Prostate gland (tissue), 2 donors: ENCODE measurements at regions of chr2 and their contacts with region 1.

Region 1: DNA sequence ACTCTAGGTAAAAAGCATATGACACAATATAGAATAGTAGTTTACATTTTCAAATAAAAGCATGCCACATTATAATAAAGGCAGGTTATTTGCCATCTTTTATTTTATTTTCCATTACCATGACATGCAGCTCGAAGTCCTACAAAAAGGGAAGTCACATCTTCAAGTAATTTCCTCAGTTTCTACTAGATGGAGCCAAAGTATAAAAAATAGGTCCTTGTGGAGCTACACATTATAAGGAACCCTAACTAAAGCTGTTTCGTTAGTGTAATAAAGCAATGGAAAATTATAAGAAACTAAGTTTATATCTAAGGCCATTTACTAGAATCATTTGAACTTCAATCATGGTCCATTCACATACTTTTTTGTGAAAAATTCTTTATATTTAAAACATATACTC is 674.5 kb downstream of the KCNJ3 start:
- DNase-seq: no peak
- H3K4me3 ChIP-seq: no peak overlapping the region
- H3K27ac ChIP-seq: no peak overlapping the region
- H3K4me1 ChIP-seq: no peaks in the 10 kb centered on the region
- H3K27me3 ChIP-seq: no peaks in the 10 kb centered on the region
- CTCF ChIP-seq: no peak
- POLR2A ChIP-seq: no peak

Region 2: GRCh38 chr2:154466226-154466625 is 906.7 kb before region 1 on chr2:
- intact Hi-C with region 1: no loop called
- DNase-seq: no peak
- H3K4me3 ChIP-seq: no peak overlapping the region
- H3K27ac ChIP-seq: no peak overlapping the region
- H3K4me1 ChIP-seq: no peaks in the 10 kb centered on the region
- H3K27me3 ChIP-seq: no peaks in the 10 kb centered on the region
- CTCF ChIP-seq: no peak
- POLR2A ChIP-seq: no peak

Region 3: GRCh38 chr2:154978710-154979109 is 394.3 kb before region 1 on chr2:
- intact Hi-C with region 1: no loop called
- DNase-seq: no peak
- H3K4me3 ChIP-seq: no peak overlapping the region
- H3K27ac ChIP-seq: no peak overlapping the region
- H3K4me1 ChIP-seq: no peaks in the 10 kb centered on the region
- H3K27me3 ChIP-seq: no peaks in the 10 kb centered on the region
- CTCF ChIP-seq: no peak
- POLR2A ChIP-seq: no peak

Region 4: GRCh38 chr2:157194097-157194688 is 1821.2 kb after region 1 on chr2:
- intact Hi-C with region 1: loop called (anchors 5 kb)
- DNase-seq: peak; percentile 9
- H3K4me3 ChIP-seq: no peak overlapping the region
- H3K27ac ChIP-seq: no peak overlapping the region
- H3K4me1 ChIP-seq: no peaks in the 10 kb centered on the region
- H3K27me3 ChIP-seq: no peaks in the 10 kb centered on the region
- CTCF ChIP-seq: peak in 3 of 4 experiments; percentile 31 to 77 (median 70)
- POLR2A ChIP-seq: no peak